Dorsolateral prefrontal cortex (tissue), 120 donors: ENCODE measurements at regions of chr5 and their contacts with region 1.

Region 1: DNA sequence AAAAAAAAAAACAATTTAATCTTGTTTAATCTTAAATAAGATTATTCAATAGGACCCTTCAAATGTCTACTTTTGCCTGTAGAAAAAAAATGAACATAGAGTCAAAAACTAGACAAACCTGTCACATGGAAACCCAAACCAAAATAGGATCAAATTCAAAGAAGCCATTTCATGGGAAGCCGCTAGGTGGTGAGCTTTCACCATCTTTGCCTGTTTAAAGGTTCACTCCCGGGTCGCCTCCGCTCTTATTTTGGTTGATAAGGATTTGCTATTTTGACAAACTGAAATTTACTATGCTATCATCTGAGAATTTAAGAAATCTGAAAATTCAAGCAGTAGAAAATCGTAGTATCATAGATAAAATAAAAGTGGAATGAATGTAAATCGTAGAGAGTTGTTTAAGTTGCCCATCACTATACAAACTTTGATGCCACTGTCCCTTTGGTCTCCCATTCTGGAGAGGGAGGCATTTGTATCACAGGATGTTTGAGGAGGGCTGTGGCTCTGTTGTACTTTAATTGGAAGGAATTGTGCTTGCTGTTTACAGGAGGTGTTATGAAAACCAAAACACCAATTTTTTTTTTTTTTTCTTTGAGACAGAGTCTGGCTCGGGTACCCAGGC is 43.5 kb upstream of the DNAH5 start:
- DNase-seq: peak in 6 of 10 donors; percentile 42 to 69 (median 47)
- H3K4me3 ChIP-seq: no peak overlapping the region
- H3K27ac ChIP-seq: no peak overlapping the region
- H3K27me3 ChIP-seq: peaks cover 0 to 13% (median 0%) of the 10 kb centered on the region in 45 donors
- CTCF ChIP-seq: peak; percentile 69 to 95 (median 85)

Region 2: DNA sequence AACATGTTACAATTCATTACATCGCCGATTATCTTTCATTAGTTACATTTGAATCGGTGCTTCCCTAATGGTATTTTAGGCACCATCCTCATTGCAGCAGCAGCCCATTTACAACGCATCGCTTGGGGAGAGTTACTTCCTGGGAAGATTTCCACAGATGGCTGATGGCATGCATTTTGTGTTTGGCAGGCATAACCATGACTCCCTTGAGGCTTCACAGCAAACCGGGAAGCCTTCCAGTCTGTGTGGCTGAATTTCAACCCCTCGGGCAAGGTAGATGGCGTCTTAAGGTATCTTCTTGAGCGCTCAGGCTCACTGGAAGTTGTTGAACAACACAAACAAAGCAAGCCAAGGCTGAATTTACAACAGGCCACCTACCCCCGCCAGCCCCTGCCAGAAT is 41.8 kb before region 1 on chr5:
- intact Hi-C with region 1: no loop called
- DNase-seq: peak in 9 of 10 donors; percentile 14 to 60 (median 50)
- H3K4me3 ChIP-seq: peak overlapping the region in 4 of 59 donors; percentile 11 to 33 (median 18)
- H3K27ac ChIP-seq: peak overlapping the region in 3 of 59 donors; percentile 4 to 44 (median 42)
- H3K27me3 ChIP-seq: peaks cover 0 to 2% (median 0%) of the 10 kb centered on the region in 45 donors
- CTCF ChIP-seq: no peak

Region 3: GRCh38 chr5:14144586-14145434 is 156.9 kb after region 1 on chr5:
- intact Hi-C with region 1: no loop called
- DNase-seq: peak in 7 of 10 donors; percentile 27 to 71 (median 41)
- H3K4me3 ChIP-seq: peak overlapping the region; percentile 66 to 92 (median 81)
- H3K27ac ChIP-seq: peak overlapping the region in 57 of 59 donors; percentile 23 to 97 (median 84)
- H3K27me3 ChIP-seq: no peaks in the 10 kb centered on the region
- CTCF ChIP-seq: peak in 1 of 56 donors; percentile 3

Region 4: DNA sequence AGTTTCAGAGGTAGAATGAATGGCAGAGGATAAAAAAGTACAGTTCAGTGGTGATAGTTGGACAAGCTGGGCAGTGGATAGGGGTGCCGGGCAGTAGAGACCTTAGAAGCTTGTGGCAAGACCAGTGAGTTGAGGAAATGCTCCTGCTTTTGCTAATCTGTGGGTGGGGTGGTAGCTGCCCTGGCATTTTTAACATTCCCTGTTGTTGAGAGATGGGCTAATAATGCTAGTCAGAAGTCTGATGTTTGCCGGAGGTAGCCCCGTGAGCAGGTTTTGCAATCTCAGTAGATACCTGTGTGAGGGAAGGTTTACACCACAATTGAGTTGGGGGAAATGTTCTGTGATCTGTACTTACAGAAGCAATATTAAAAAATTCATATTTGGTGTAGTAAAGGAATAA is 246.3 kb after region 1 on chr5:
- intact Hi-C with region 1: no loop called
- DNase-seq: no peak
- H3K4me3 ChIP-seq: no peak overlapping the region
- H3K27ac ChIP-seq: no peak overlapping the region
- H3K27me3 ChIP-seq: no peaks in the 10 kb centered on the region
- CTCF ChIP-seq: no peak

Region 5: DNA sequence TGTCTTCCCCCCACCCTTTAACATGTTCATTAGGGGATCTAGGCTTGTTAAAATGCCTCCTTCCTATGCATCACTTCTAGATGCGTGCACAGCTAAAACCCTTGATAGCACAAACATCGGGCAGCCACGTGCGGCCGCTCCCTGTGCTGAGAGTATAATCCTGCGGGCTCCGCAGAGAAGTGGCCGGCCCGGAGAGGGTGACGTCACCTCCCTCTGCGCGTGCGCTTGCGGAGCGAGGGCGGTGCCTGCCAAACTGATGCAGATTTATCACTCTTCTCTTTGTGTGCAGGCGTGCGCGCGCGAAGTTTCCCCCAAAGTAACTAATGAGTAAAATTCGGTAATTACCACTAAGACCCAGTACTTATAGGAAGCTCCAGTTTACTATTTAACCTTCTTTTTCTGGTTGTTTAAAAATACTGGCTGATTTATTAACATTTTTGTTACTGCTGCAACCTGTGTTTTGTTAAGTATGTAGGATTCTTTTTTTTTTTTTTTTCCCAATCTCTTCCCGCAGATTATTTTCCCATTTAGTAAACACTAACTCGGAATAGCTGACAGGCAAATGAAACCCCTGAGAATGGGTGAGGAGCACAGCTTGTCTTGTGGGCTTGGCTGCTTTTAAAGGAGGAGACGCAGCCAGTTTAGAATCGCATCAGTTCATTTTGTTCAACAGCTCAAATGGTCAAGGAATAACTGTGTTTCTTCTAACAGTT is 276.8 kb after region 1 on chr5:
- intact Hi-C with region 1: loop called in 1 of 2 experiments (anchors 5 kb)
- DNase-seq: peak; percentile 84 to 94 (median 92)
- H3K4me3 ChIP-seq: peak overlapping the region in 58 of 59 donors; percentile 1 to 64 (median 46)
- H3K27ac ChIP-seq: peak overlapping the region in 25 of 59 donors; percentile 4 to 80 (median 26)
- H3K27me3 ChIP-seq: peaks cover 0 to 4% (median 0%) of the 10 kb centered on the region in 45 donors
- CTCF ChIP-seq: peak in 19 of 56 donors; percentile 1 to 48 (median 28)

Region 6: GRCh38 chr5:14364576-14365472 is 376.9 kb after region 1 on chr5:
- intact Hi-C with region 1: loop called in 1 of 2 experiments (anchors 10 kb)
- DNase-seq: no peak
- H3K4me3 ChIP-seq: no peak overlapping the region
- H3K27ac ChIP-seq: peak overlapping the region in 5 of 59 donors; percentile 2 to 57 (median 11)
- H3K27me3 ChIP-seq: no peaks in the 10 kb centered on the region
- CTCF ChIP-seq: peak in 24 of 56 donors; percentile 1 to 51 (median 24)

Region 7: DNA sequence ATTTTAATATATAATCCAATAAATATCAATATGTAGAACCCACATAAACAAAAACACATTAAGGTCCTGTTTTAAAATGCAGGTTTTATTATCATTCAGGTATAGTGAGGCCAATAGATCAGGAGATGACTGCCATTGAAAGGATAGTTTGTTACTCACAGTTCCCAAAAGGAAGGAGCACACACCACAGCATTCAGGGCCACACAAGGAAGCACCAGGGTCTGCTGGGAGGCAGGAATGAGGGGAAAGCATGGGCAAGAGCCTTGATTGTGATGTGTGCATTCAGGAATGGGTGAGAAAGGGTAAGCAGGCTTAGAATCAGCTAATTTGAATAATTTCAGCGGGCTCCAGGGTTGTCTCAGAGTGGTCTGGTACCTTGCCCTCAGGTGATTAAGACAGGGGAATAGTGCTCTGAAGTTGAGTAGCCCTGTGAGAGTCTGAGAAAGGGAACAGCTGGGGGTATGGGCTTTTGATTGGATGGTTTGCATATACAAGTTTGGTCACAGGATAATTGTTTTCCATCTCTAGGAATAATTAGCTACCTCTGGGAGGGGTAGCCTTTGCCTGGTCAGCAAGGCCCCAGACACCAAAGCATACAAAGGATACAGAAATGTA is 656.8 kb after region 1 on chr5:
- intact Hi-C with region 1: loop called in 1 of 2 experiments (anchors 10 kb)
- DNase-seq: no peak
- H3K4me3 ChIP-seq: no peak overlapping the region
- H3K27ac ChIP-seq: no peak overlapping the region
- H3K27me3 ChIP-seq: peaks cover 0 to 39% (median 0%) of the 10 kb centered on the region in 45 donors
- CTCF ChIP-seq: no peak

Region 8: GRCh38 chr5:15013654-15014463 is 1025.9 kb after region 1 on chr5:
- intact Hi-C with region 1: loop called in 1 of 2 experiments (anchors 10 kb)
- DNase-seq: no peak
- H3K4me3 ChIP-seq: no peak overlapping the region
- H3K27ac ChIP-seq: no peak overlapping the region
- H3K27me3 ChIP-seq: no peaks in the 10 kb centered on the region
- CTCF ChIP-seq: peak; percentile 61 to 92 (median 78)